IMR-90 (cell line): ENCODE measurements at regions of chr5 and their contacts with region 1.

Region 1: DNA sequence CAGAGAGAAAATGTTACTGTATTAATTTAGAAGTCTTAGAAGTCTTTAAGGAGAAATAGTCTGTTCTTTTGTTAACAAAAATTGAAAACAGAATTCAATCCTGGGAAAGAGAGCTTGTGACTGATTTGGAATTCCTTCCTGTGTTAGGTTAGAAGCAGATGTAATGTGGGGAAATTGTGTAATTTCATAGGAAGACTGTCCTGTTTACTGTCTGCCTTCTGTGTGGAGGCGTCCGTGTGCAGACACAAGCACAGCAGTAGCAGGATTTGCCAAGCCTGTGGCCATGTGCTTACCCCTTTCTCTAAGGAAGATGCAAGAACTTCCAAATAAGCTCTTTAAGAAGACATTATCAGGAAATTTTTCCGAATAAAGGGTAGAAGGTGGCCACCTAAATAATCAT is 36.7 kb upstream of the F2R start:
- DNase-seq: peak; percentile 83
- ATAC-seq: peak; percentile 88
- H3K4me3 ChIP-seq: no peak overlapping the region
- H3K27ac ChIP-seq: peak overlapping the region; percentile 46; the same call in 1 of the 2 replicates
- H3K4me1 ChIP-seq: no peaks in the 10 kb centered on the region; the same call in 1 of the 2 replicates
- H3K27me3 ChIP-seq: no peaks in the 10 kb centered on the region
- CTCF ChIP-seq: no peak
- POLR2A ChIP-seq: no peak
- RAD21 ChIP-seq: no peak

Region 2: DNA sequence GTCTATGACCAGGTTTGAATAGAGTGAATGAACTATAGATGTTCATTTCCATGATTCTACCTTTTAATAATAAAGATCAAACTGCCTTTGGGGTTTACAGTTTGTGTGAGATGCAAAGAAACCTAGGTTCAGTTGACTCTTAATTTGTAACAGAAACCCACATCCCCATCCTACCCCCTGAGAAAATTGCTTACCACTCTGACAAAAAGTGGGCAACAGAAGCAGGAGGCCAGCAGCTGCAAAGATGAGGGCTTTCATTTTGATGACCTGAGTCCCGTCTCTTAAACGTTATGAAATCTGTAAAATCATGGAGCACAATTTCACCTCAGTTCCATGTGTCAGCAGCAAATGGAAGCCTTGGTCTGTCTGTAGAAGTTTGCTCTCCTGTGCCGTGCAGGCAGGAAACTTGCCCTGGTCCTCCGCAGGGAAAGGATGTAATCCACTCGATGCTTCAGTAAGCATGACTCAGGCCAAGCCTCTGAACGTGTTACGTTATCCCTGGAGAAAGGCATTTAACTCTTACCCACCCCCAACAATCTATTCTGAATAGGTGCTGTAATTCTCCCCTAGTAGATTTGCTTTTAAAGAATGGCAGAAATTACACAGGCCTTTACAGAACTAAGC is 56.1 kb before region 1 on chr5 and contains the start of gene F2RL2:
- CTCF ChIA-PET with region 1: no interaction called
- POLR2A ChIA-PET with region 1: no interaction called
- dilution Hi-C with region 1: no loop called
- in situ Hi-C with region 1: no loop called
- intact Hi-C with region 1: no loop called
- DNase-seq: peak; percentile 93
- ATAC-seq: peak; percentile 97
- H3K4me3 ChIP-seq: peak within 1 kb of the TSS; percentile 44
- H3K27ac ChIP-seq: peak within 1 kb of the TSS; percentile 89
- H3K4me1 ChIP-seq: peaks cover 4% of the 10 kb centered on the region; the same call in 1 of the 2 replicates
- H3K27me3 ChIP-seq: no peaks in the 10 kb centered on the region
- CTCF ChIP-seq: no peak
- POLR2A ChIP-seq: peak; percentile 76; the same call in 1 of the 2 replicates
- RAD21 ChIP-seq: no peak
- total RNA-seq, gene F2RL2: 18.1 and 21.7 TPM in 2 replicates

Region 3: DNA sequence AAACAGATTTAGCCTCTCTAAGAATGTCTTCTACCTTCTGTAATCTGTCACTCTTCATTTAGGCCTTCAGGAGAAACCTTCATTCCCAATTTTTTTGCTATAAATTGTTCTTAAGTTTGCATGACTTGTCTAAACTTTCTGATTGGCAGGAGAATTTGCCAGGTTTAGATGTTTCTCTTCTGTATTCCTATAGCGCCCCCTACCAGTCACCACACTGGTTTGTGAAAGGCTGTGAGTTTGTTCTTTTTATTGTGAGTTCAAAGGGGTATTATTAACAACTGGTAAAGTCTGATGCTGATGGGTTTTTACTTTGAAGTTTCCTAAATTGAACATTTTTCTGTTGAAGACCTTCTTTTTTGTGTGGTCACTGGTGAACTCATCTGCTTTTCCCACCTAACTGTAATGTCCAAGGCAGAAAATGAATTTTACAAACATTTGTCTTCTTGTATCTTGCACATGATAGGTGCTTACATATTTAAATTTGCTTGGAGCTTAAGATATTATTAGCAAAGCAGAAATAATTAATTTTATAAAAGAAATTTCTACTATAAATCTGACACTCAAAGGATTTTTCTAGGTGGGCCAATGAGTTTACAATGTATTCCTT is 37.6 kb before region 1 on chr5:
- CTCF ChIA-PET with region 1: no interaction called
- POLR2A ChIA-PET with region 1: no interaction called
- dilution Hi-C with region 1: no loop called
- in situ Hi-C with region 1: no loop called
- intact Hi-C with region 1: loop called (anchors 1 kb)
- DNase-seq: peak; percentile 79
- ATAC-seq: peak; percentile 69
- H3K4me3 ChIP-seq: no peak overlapping the region
- H3K27ac ChIP-seq: no peak overlapping the region
- H3K4me1 ChIP-seq: peaks cover 10% of the 10 kb centered on the region
- H3K27me3 ChIP-seq: no peaks in the 10 kb centered on the region
- CTCF ChIP-seq: peak; percentile 94
- POLR2A ChIP-seq: no peak
- RAD21 ChIP-seq: peak; percentile 93

Region 4: DNA sequence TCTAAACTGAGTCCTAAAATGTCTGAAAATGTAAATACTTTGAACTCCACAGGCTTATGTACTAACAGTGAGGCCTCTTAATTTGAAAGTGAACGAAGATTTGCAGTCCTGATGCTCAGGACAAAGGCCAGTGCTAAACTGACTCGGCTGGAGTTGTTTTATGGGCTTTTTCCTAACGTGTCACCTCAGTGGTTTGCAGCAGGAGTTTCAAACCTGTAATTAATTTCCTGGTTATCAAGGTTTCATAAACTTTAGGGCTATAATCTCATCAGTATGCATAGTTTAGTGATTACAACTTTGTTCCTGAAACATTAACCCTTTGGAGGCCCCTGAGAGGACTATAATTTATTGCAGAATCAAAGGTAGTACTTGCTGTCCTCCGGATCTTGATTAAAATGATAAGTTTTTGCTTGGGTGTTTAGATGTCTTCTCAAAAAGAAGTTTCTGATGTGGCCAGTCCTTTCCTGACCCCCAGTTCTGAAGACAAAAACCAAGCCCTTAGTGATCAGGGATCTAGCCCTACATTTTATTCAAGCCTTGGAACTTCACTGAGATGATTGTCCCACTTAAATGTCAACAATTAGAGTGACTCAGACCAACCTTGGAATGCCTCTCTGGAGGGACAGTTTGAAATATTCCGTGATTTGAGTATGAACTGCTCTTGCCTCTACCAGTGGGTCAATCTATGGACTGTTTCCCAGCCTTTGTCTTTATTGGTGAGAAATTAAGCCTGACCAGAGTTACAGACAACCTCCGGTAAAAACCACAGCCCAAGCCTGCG is 159.4 kb after region 1 on chr5:
- CTCF ChIA-PET with region 1: no interaction called
- POLR2A ChIA-PET with region 1: no interaction called
- dilution Hi-C with region 1: no loop called
- in situ Hi-C with region 1: no loop called
- intact Hi-C with region 1: no loop called
- DNase-seq: peak; percentile 76
- ATAC-seq: peak; percentile 78
- H3K4me3 ChIP-seq: no peak overlapping the region
- H3K27ac ChIP-seq: peak overlapping the region; percentile 85
- H3K4me1 ChIP-seq: peaks cover 13% of the 10 kb centered on the region
- H3K27me3 ChIP-seq: no peaks in the 10 kb centered on the region
- CTCF ChIP-seq: no peak
- POLR2A ChIP-seq: no peak
- RAD21 ChIP-seq: no peak

Region 5: DNA sequence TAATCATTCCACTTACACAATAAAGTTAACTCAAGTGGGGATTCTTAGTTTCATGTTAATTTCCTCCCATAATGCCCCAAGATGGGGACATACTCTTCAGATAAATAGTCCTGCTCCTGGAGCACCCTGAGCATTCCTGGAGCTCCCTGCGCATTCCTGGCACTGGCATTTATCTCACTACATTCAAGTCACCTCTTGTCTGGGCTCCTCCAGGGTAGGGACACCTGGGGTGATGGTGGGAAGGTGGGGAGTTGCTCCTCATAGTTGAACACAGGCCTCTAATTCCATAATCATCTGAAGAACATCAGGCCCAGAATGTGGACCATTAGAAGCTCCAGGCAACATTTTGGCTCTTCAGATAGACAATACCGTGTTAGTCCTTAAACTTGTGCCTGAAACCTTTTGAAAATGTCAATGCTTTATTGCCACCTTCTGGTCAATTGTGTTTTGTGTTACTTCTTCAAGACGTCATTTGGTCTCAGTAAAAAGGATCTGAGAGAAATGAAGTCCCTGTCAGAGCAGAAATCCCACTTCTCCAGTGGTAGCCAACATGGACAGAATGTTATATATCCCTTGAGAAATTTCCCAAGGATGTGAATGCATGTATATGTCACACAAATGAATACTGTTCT is 336.8 kb after region 1 on chr5:
- CTCF ChIA-PET with region 1: no interaction called
- POLR2A ChIA-PET with region 1: no interaction called
- dilution Hi-C with region 1: no loop called
- in situ Hi-C with region 1: no loop called
- intact Hi-C with region 1: no loop called
- DNase-seq: peak; percentile 69
- ATAC-seq: peak; percentile 64
- H3K4me3 ChIP-seq: no peak overlapping the region
- H3K27ac ChIP-seq: no peak overlapping the region
- H3K4me1 ChIP-seq: no peaks in the 10 kb centered on the region
- H3K27me3 ChIP-seq: peaks cover 7% of the 10 kb centered on the region
- CTCF ChIP-seq: peak; percentile 43
- POLR2A ChIP-seq: no peak
- RAD21 ChIP-seq: peak; percentile 53